ENCODE measurements at regions of chr20 and their contacts with region 1.

Region 1: DNA sequence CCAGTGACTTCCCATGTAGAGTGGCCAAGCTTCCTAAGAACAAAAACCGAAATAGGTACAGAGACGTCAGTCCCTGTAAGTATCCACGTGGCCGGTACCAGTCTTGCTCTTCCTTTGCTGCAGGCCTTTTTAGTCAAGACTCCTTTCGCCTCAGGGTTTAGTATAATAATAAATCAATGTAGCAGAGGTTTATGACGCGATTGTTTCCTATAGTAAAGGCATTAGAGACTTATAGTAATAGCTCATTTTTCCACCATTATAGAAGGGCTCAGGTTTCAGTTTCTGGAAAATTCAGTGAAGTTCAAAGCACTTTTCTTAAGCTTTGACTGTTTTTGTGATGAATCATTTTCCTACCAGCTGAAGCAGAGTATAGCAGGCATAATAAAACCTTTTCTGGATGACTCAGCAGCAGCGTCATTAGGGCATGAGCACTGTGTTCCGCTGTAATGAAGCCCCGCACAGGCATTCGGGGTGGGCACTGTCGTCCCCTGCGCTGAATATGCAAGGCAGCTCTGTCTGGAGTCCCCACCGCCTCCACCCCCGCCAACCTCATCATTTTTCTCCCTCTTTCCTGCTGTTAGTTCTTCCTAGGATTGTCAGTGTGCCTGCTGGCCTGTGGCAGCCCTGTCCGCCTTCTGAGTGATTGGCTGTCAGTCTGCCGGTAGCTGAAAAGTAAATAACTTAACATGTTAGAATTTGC is 51.3 kb downstream of the PTPN1 start:
- DNase-seq: peak; percentile 85
- ATAC-seq: peak; percentile 84
- H3K4me3 Mint-ChIP-seq: peak overlapping the region; percentile 76
- H3K27ac Mint-ChIP-seq: peak overlapping the region; percentile 99
- H3K4me1 Mint-ChIP-seq: peaks cover 85% of the 10 kb centered on the region
- H3K27me3 Mint-ChIP-seq: no peaks in the 10 kb centered on the region

Region 2: DNA sequence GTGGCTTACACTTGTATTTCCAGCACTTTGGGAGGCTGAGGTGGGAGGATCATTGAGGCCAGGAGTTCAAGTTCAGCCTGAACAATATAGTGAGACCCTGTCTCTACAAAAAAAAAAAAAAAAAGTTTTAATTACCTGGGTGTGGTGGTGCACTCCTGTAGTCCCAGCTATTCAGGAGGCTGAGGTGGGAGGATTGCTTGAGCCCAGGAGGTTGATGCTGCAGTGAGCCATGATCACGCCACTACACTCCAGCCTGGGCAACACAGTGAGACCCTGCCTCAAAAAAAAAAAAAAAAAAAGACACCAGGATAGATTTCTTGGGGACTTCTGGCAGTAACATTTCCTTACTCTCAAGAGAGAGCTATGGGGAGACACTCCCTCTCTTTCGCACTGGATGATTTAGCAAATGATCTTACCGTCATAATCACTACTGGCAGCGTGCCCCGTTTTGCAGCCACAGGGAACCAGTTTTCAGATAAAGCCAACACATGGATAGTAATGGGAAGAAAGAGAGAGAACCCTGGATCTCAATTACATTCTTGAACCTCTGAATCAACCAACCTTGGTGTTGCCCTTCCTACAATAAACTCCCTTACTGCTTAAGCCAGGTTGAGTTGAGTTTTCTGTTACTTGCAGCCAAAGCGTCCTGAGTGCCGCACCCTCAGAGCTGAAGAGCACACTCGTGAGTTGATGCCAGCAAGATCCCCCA is 69.4 kb before region 1 on chr20:
- CTCF ChIA-PET with region 1: interaction called, 5 read pairs
- POLR2A ChIA-PET with region 1: interaction called, 4 read pairs
- intact Hi-C with region 1: loop called (anchors 1 kb)
- DNase-seq: no peak
- ATAC-seq: no peak
- H3K4me3 Mint-ChIP-seq: no peak overlapping the region
- H3K27ac Mint-ChIP-seq: peak overlapping the region; percentile 95
- H3K4me1 Mint-ChIP-seq: peaks cover 36% of the 10 kb centered on the region
- H3K27me3 Mint-ChIP-seq: no peaks in the 10 kb centered on the region

Region 3: DNA sequence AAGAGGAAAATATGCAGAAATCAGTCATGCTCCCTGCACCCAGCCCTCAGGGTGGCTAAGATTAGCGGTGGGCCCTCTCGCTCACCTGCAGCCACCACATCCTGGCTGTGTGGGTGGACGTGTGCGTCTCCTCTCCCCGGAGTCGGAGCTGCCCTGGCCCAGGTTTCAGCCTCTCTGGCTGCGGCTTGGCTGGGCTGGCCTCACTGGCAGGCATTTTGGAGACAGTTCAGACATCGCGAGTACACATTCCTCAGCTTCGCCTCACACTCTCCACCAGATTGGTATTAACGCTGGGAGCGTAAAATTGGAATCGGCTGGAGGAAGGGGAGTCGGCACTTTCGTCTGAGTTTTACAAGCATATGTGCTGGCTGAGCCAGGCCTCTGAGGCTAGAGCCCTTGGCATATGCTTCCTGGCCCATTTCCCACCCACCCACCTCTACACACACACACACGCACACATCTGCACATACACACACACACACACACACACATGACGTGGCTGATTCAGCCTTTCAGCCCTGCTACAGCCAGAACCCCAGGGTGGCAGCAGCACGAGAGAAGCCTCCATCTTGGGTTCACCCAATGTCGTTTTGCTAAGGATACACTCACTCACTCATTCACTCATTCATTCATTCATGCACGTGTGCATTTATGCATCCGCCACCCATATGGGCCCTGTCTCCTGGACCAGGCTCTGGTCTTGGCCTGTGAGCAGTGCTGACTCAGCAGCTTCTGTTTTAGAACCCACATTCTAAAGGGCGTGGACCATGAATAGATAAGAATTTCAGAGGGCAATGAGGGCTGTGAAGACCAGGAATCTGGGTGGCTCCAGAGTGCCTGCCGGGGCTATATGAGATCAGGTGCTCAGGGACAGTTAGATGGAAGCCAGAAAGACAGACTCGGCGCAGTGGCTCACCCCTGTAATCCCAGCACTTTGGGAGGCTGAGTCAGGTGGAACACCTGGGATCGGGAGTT is 276.3 kb after region 1 on chr20:
- CTCF ChIA-PET with region 1: no interaction called
- POLR2A ChIA-PET with region 1: no interaction called
- intact Hi-C with region 1: no loop called
- DNase-seq: peak; percentile 21
- ATAC-seq: peak; percentile 47
- H3K4me3 Mint-ChIP-seq: no peak overlapping the region
- H3K27ac Mint-ChIP-seq: no peak overlapping the region
- H3K4me1 Mint-ChIP-seq: peaks cover 3% of the 10 kb centered on the region
- H3K27me3 Mint-ChIP-seq: no peaks in the 10 kb centered on the region

Measured in activated CD4-positive, alpha-beta T cell treated with anti-CD3 and anti-CD28 coated beads for 36 hours (primary cell).